Gastrocnemius medialis (tissue), 4 donors: ENCODE measurements at regions of chr14 and their contacts with region 1.

Region 1: DNA sequence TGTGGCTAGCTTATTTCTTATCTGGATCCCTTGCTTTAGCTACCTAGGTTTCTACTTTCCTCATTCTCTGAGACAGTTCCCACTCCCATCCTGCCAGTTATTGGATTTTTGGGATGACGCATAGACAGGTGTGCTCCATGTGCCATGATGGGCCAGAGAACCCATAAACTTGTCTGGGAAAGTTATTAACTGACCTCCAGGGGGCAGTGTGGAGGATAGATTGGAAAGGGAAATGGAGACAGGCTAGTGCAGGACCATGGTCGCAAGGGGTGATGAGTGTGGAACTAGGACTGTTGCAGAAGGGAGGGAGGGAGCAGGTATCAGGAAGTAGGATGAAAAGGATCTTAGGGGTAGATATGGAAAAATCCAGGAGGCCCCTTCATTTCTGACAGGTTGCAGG is 80.3 kb downstream of the ESRRB start:
- DNase-seq: no peak
- ATAC-seq: peak; percentile 51 to 62
- H3K4me3 ChIP-seq: no peak overlapping the region
- H3K27ac ChIP-seq: no peak overlapping the region
- H3K4me1 ChIP-seq: no peaks in the 10 kb centered on the region
- H3K27me3 ChIP-seq: no peaks in the 10 kb centered on the region
- CTCF ChIP-seq: peak in 4 of 5 experiments; percentile 46 to 59 (median 56)
- POLR2A ChIP-seq: no peak

Region 2: GRCh38 chr14:75915061-75915460 is 541.1 kb before region 1 on chr14:
- in situ Hi-C with region 1: no loop called
- intact Hi-C with region 1: no loop called
- DNase-seq: no peak
- ATAC-seq: peak; percentile 45 to 62
- H3K4me3 ChIP-seq: no peak overlapping the region
- H3K27ac ChIP-seq: no peak overlapping the region
- H3K4me1 ChIP-seq: peaks cover 0 to 13% of the 10 kb centered on the region in 2 donors
- H3K27me3 ChIP-seq: no peaks in the 10 kb centered on the region
- CTCF ChIP-seq: no peak
- POLR2A ChIP-seq: no peak

Region 3: GRCh38 chr14:76546426-76547221 is 90.4 kb after region 1 on chr14:
- in situ Hi-C with region 1: no loop called
- intact Hi-C with region 1: loop called (anchors 10 kb)
- DNase-seq: no peak
- ATAC-seq: peak in 1 of 2 donors; percentile 27
- H3K4me3 ChIP-seq: no peak overlapping the region
- H3K27ac ChIP-seq: no peak overlapping the region
- H3K4me1 ChIP-seq: no peaks in the 10 kb centered on the region
- H3K27me3 ChIP-seq: peaks cover 0 to 6% (median 0%) of the 10 kb centered on the region in 3 donors
- CTCF ChIP-seq: peak in 4 of 5 experiments; percentile 13 to 48 (median 32)
- POLR2A ChIP-seq: no peak